ENCODE measurements at regions of chr18 and their contacts with region 1.

Region 1: DNA sequence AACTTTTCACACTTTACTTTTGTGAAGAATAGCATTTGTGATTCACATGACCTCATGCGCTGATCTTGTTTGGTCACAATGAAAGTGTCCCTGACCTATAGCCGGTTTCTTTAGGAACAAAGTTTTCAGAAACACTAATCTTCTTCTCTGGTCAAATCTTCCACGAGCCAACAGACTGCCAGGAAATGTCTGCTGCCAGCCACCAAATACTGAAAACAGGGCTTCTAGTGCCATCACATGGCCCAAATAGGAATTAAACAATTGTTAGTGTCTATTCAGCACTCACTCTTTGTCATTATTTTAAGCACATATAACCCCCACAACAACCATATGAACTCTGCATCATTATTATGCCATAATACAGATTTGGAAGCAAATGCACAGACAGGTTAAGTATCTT is 286.5 kb upstream of the SYT4 start:
- DNase-seq: no peak
- H3K4me3 ChIP-seq: no peak overlapping the region
- H3K27ac ChIP-seq: no peak overlapping the region
- H3K4me1 ChIP-seq: no peaks in the 10 kb centered on the region
- H3K27me3 ChIP-seq: peaks cover 0 to 9% of the 10 kb centered on the region in 2 donors
- CTCF ChIP-seq: no peak

Region 2: GRCh38 chr18:42298759-42299675 is 1264.8 kb before region 1 on chr18:
- intact Hi-C with region 1: loop called (anchors 10 kb)
- DNase-seq: peak; percentile 76 to 77
- H3K4me3 ChIP-seq: peak overlapping the region; percentile 9 to 33
- H3K27ac ChIP-seq: no peak overlapping the region
- H3K4me1 ChIP-seq: no peaks in the 10 kb centered on the region
- H3K27me3 ChIP-seq: no peaks in the 10 kb centered on the region
- CTCF ChIP-seq: peak; percentile 56 to 86